Common myeloid progenitor, CD34-positive (primary cell): ENCODE measurements at regions of chr6 and their contacts with region 1.

Region 1: GRCh38 chr6:148578245-148578732 is 168.5 kb upstream of the UST start:
- DNase-seq: peak; percentile 77 to 86 (median 83)
- H3K4me3 ChIP-seq: no peak overlapping the region
- H3K27ac ChIP-seq: no peak overlapping the region
- H3K4me1 ChIP-seq: no peaks in the 10 kb centered on the region
- H3K27me3 ChIP-seq: no peaks in the 10 kb centered on the region

Region 2: GRCh38 chr6:148559848-148560433 is 18.3 kb before region 1 on chr6:
- CTCF ChIA-PET with region 1: interaction called, 35 read pairs
- POLR2A ChIA-PET with region 1: no interaction called
- DNase-seq: peak; percentile 68 to 82 (median 81)
- H3K4me3 ChIP-seq: peak overlapping the region; percentile 18 to 71 (median 51)
- H3K27ac ChIP-seq: no peak overlapping the region
- H3K4me1 ChIP-seq: peaks cover 4 to 24% (median 18%) of the 10 kb centered on the region in 4 experiments
- H3K27me3 ChIP-seq: peaks cover 0 to 22% (median 9%) of the 10 kb centered on the region in 5 experiments

Region 3: DNA sequence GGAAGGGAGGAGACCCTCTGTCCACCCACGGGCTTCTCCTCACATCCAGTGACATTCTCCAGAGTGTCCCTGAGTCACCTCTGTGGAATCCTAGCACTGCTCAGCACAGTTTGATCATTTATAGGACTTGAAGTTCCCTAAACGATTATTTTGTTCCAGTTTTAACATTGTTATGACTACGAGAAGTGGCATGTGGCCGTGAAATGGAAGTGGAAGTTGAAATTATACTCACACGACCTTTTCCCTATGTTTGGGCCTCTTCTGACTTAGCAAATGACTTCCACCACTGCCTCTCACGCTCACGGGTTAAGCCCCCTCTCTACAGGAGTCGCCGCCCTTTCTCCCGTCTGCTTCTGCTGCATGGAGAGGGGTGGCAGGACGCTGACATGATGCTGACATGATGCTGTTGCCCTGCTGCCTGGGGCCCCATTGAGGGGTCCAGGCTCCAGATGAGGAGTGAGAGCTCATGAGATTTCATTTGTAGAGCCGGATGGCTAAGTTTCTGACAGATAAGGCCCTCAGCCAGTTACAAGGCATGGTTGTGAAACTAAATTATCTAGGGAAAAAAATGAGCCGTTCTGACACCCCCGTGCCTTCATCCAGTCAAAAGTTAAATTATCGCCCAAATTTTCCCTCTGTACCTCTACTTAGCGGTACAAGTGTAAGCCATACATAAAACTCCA is 15.0 kb after region 1 on chr6:
- CTCF ChIA-PET with region 1: interaction called, 12 read pairs
- POLR2A ChIA-PET with region 1: no interaction called
- DNase-seq: no peak
- H3K4me3 ChIP-seq: no peak overlapping the region
- H3K27ac ChIP-seq: no peak overlapping the region
- H3K4me1 ChIP-seq: no peaks in the 10 kb centered on the region
- H3K27me3 ChIP-seq: no peaks in the 10 kb centered on the region

Region 4: GRCh38 chr6:148947621-148948444 is 369.5 kb after region 1 on chr6:
- CTCF ChIA-PET with region 1: interaction called, 27 read pairs
- POLR2A ChIA-PET with region 1: no interaction called
- DNase-seq: peak; percentile 75 to 84 (median 77)
- H3K4me3 ChIP-seq: no peak overlapping the region
- H3K27ac ChIP-seq: no peak overlapping the region
- H3K4me1 ChIP-seq: no peaks in the 10 kb centered on the region
- H3K27me3 ChIP-seq: no peaks in the 10 kb centered on the region

Region 5: DNA sequence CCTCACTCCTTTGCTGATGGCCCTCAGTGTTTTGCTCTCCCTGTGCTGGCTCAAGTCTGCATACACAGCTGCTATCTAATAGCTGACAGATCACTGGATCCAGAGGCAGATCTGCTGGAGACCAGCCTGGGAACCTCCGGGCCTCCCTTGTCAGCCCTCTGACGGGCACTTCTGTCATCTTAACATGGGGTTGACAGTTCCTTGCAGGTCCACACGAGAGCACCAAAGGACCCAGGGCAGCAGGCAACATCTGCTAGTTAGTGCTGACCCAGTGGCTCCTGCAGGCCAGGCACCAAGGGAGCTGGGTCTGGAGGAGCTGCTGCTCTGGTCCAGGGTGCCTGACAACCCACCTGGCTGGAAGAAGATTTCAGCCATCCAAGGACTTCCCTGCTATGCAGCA is 376.6 kb after region 1 on chr6:
- CTCF ChIA-PET with region 1: interaction called, 27 read pairs
- POLR2A ChIA-PET with region 1: no interaction called
- DNase-seq: no peak
- H3K4me3 ChIP-seq: no peak overlapping the region
- H3K27ac ChIP-seq: no peak overlapping the region
- H3K4me1 ChIP-seq: no peaks in the 10 kb centered on the region
- H3K27me3 ChIP-seq: no peaks in the 10 kb centered on the region

Region 6: GRCh38 chr6:148967541-148967956 is 389.3 kb after region 1 on chr6:
- CTCF ChIA-PET with region 1: interaction called, 12 read pairs
- POLR2A ChIA-PET with region 1: no interaction called
- DNase-seq: no peak
- H3K4me3 ChIP-seq: no peak overlapping the region
- H3K27ac ChIP-seq: no peak overlapping the region
- H3K4me1 ChIP-seq: peaks cover 0 to 6% (median 1%) of the 10 kb centered on the region in 4 experiments
- H3K27me3 ChIP-seq: no peaks in the 10 kb centered on the region